ENCODE measurements at regions of chr19 and their contacts with region 1.

Region 1: DNA sequence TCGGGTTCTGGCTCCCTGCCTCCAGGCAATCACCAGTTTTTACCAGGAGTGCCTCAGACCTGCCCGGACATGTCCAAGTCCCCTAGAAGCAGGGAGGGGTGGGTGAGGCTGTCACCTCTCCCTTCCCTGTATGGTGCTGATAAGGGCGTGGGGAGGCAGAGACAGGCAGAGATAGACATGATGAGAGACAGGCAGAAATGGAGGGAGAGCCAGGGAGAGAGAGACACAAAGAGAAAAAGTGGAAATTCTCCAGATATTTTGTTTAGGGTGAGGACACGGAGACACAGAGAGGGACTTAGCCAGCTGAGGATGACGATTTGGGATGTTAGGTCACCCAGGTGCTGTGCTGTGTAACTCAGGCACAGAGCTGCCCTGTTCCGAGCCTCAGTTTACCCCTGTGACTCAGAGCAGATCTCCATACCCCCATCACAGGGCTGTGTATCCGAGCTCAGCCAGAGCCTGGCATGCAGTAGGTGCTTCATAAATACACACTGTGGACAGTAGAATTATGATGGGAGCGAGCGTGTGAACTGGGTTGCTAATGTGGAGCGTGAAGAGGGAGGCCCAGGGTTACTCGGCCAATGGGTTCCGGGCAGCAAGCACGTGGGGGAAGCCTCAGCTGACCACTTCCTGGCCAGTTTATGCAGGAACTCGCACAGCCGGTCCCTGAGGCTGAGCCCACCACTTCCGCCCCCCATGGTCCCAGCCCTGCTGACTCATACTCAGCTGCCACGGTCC is 11.9 kb upstream of the GDF15 start:
- DNase-seq: peak; percentile 50
- ATAC-seq: peak; percentile 86
- H3K4me3 Mint-ChIP-seq: peak overlapping the region; percentile 7
- H3K27ac Mint-ChIP-seq: peak overlapping the region; percentile 41
- H3K4me1 Mint-ChIP-seq: peaks cover 25% of the 10 kb centered on the region
- H3K27me3 Mint-ChIP-seq: no peaks in the 10 kb centered on the region
- CTCF ChIP-seq: no peak

Region 2: DNA sequence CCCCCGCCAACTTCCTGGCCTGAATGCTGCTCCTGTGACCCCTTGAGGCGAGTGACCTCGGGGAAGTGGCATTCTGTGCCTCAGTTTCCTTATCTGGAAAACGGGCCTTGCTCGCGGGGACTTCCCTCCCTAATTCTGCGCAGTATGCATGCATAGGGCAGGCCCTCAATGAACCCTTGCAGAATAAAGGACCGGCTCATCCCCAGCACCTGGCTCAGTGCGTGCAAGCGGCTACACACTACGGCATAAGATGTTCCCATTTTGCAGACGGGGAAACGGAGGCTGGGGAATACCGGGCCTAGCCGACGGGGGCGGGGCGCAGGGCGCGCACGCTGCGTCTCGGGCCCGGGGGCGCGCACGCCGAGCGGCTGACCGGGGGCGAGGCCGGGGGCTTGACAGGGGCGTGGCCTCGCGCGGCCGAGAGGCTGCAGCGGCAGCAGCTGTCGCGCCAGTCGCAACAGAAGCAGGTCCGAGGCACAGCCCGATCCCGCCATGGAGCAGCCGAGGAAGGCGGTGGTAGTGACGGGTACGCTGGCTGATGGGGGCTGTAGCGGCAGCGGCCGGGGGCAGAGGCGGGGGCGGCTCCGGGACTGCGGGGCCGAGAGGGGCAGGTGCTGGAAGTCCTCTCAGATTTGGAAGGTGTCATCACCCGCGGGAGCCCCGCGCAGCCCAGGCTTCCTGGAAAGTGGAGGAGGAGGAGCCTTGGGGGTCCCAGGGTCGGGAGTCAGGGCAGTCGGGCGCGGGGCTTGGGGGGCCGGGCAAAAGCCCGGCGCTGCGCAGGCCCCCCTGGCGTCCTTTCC is 33.7 kb before region 1 on chr19 and contains the start of gene PGPEP1:
- CTCF ChIA-PET with region 1: no interaction called
- POLR2A ChIA-PET with region 1: no interaction called
- intact Hi-C with region 1: loop called (anchors 1 kb)
- DNase-seq: peak; percentile 70
- ATAC-seq: peak; percentile 72
- H3K4me3 Mint-ChIP-seq: peak within 1 kb of the TSS; percentile 80
- H3K27ac Mint-ChIP-seq: peak within 1 kb of the TSS; percentile 3
- H3K4me1 Mint-ChIP-seq: peaks cover 13% of the 10 kb centered on the region
- H3K27me3 Mint-ChIP-seq: peaks cover 6% of the 10 kb centered on the region
- CTCF ChIP-seq: no peak
- total RNA-seq, gene PGPEP1: 5.6 and 6.9 TPM in 2 replicates